Activated CD4-positive, alpha-beta memory T cell treated with anti-CD3 and anti-CD28 coated beads for 36 hours (primary cell): ENCODE measurements at regions of chr17 and their contacts with region 1.

Region 1: DNA sequence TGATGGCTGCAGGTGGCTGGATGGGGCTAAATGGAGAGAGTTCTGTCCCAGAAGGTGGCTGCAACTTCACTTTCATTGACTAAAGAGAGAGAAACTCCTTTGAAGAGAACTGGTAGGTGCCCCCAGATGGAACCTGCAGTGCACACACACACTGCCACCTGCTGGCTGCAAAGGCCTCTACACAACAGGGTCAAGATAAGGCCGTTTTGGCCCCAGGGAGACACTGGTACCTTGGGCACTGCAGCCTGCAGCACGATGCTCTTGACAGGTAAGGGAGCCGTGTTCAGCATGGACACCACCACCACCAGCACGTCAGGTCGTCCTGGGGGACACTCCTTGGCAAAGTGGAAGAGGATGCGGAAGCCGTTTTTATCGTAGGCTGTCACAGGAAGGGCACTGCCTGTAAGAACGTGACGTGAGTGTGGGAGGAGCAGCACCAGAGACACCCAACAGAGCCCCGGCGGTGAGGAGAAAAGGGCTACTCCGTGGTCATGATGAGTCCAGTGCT is 22.7 kb downstream of the GGA3 start:
- DNase-seq: peak; percentile 74
- H3K4me3 Mint-ChIP-seq: no peak overlapping the region
- H3K27ac Mint-ChIP-seq: peak overlapping the region; percentile 85
- H3K4me1 Mint-ChIP-seq: peaks cover 41% of the 10 kb centered on the region
- H3K27me3 Mint-ChIP-seq: no peaks in the 10 kb centered on the region

Region 2: GRCh38 chr17:75205037-75205792 is 33.5 kb before region 1 on chr17 and contains the start of gene NUP85:
- CTCF ChIA-PET with region 1: interaction called, 12 read pairs
- POLR2A ChIA-PET with region 1: interaction called, 6 read pairs
- intact Hi-C with region 1: no loop called
- DNase-seq: peak; percentile 95
- H3K4me3 Mint-ChIP-seq: peak within 1 kb of the TSS; percentile 81
- H3K27ac Mint-ChIP-seq: peak within 1 kb of the TSS; percentile 89
- H3K4me1 Mint-ChIP-seq: peaks cover 18% of the 10 kb centered on the region
- H3K27me3 Mint-ChIP-seq: no peaks in the 10 kb centered on the region
- total RNA-seq, gene NUP85: 125 to 132 TPM

Region 3: GRCh38 chr17:75250009-75250471 is 11.3 kb after region 1 on chr17:
- CTCF ChIA-PET with region 1: interaction called, 48 read pairs
- POLR2A ChIA-PET with region 1: interaction called, 9 read pairs
- intact Hi-C with region 1: no loop called
- DNase-seq: peak; percentile 91
- H3K4me3 Mint-ChIP-seq: peak overlapping the region; percentile 58
- H3K27ac Mint-ChIP-seq: peak overlapping the region; percentile 90
- H3K4me1 Mint-ChIP-seq: peaks cover 64% of the 10 kb centered on the region
- H3K27me3 Mint-ChIP-seq: no peaks in the 10 kb centered on the region

Region 4: GRCh38 chr17:75412455-75413317 is 173.9 kb after region 1 on chr17:
- CTCF ChIA-PET with region 1: interaction called, 14 read pairs
- POLR2A ChIA-PET with region 1: no interaction called
- intact Hi-C with region 1: loop called (anchors 2 kb)
- DNase-seq: peak; percentile 86
- H3K4me3 Mint-ChIP-seq: peak overlapping the region; percentile 49
- H3K27ac Mint-ChIP-seq: peak overlapping the region; percentile 19
- H3K4me1 Mint-ChIP-seq: peaks cover 16% of the 10 kb centered on the region
- H3K27me3 Mint-ChIP-seq: peaks cover 1% of the 10 kb centered on the region

Region 5: GRCh38 chr17:75476271-75476671 is 237.5 kb after region 1 on chr17:
- CTCF ChIA-PET with region 1: no interaction called
- POLR2A ChIA-PET with region 1: no interaction called
- intact Hi-C with region 1: no loop called
- DNase-seq: no peak
- H3K4me3 Mint-ChIP-seq: no peak overlapping the region
- H3K27ac Mint-ChIP-seq: no peak overlapping the region
- H3K4me1 Mint-ChIP-seq: no peaks in the 10 kb centered on the region
- H3K27me3 Mint-ChIP-seq: no peaks in the 10 kb centered on the region